Right cardiac atrium (tissue), 5 donors: ENCODE measurements at regions of chr17 and their contacts with region 1.

Region 1: GRCh38 chr17:51703361-51704341 is 443.3 kb downstream of the UTP18 start:
- DNase-seq: peak; percentile 87 to 95 (median 89)
- ATAC-seq: peak; percentile 95 to 97
- H3K4me3 ChIP-seq: no peak overlapping the region
- H3K27ac ChIP-seq: peak overlapping the region; percentile 30
- H3K4me1 ChIP-seq: no peaks in the 10 kb centered on the region
- H3K27me3 ChIP-seq: no peaks in the 10 kb centered on the region

Region 2: GRCh38 chr17:51764387-51764972 is 60.8 kb after region 1 on chr17:
- intact Hi-C with region 1: loop called in 1 of 4 experiments (anchors 10 kb)
- DNase-seq: peak in 2 of 3 donors; percentile 13 to 47
- ATAC-seq: peak; percentile 82 to 87
- H3K4me3 ChIP-seq: no peak overlapping the region
- H3K27ac ChIP-seq: no peak overlapping the region
- H3K4me1 ChIP-seq: no peaks in the 10 kb centered on the region
- H3K27me3 ChIP-seq: peaks cover 2% of the 10 kb centered on the region